Activated CD4-positive, alpha-beta T cell treated with anti-CD3 and anti-CD28 coated beads, Interleukin-2, amount 10 ng/mL, durations not matched to agents 7 days and 5 days (primary cell): ENCODE measurements at regions of chr7 and their contacts with region 1.

Region 1: GRCh38 chr7:4331711-4332110 is 350.4 kb upstream of the FOXK1 start:
- DNase-seq: no peak
- H3K4me3 Mint-ChIP-seq: no peak overlapping the region
- H3K27ac Mint-ChIP-seq: no peak overlapping the region
- H3K4me1 Mint-ChIP-seq: no peaks in the 10 kb centered on the region
- H3K27me3 Mint-ChIP-seq: no peaks in the 10 kb centered on the region

Region 2: DNA sequence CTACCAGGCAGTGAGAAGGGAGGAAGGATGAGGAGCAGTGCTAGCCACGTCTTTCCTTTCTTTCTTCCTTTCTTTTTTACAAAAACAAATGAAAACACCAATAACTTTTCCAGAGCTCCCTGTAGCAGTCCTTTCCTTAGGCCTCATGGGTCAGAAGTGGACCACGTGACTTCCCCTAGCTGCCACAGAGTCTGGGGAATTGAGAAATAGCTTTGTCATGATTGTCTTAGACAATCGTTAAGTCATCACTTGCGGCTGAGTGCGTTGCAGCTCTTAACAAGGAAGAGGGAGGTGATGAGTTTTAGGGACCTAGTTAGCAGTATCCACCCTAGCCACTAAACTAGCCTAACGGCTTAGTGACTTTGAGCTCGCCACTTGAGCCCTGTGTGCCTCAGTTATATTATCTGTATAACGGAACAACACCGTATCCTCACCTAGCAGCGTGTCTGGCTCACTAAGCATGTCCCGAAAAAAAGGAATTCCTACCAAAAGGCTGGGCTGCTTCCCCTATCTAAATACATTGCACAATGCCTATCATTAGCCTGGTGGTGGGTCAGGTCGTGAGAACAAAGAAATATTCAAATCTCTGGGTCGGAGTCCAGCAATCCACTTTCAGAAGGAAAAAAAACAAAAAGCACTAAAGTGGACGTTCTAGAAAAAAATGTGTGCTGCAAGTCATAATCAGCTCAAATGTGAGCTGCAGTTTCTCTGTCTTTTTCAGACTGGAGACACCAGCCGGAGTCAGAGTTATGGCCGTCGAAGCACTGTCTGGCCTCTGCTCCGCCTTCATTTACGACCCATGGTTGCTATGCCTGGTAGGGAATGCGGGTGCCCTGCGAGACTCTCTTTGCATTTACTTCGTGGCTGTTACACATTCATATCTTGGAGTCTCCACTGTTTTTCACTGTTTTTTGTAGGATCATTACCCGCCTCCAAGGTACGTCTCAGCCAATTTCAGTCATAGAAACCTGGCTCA is 11.8 kb after region 1 on chr7:
- CTCF ChIA-PET with region 1: no interaction called
- POLR2A ChIA-PET with region 1: no interaction called
- DNase-seq: no peak
- H3K4me3 Mint-ChIP-seq: no peak overlapping the region
- H3K27ac Mint-ChIP-seq: no peak overlapping the region
- H3K4me1 Mint-ChIP-seq: no peaks in the 10 kb centered on the region
- H3K27me3 Mint-ChIP-seq: no peaks in the 10 kb centered on the region

Region 3: GRCh38 chr7:4416396-4417056 is 84.8 kb after region 1 on chr7:
- CTCF ChIA-PET with region 1: no interaction called
- POLR2A ChIA-PET with region 1: interaction called, 15 read pairs
- DNase-seq: no peak
- H3K4me3 Mint-ChIP-seq: no peak overlapping the region
- H3K27ac Mint-ChIP-seq: no peak overlapping the region
- H3K4me1 Mint-ChIP-seq: no peaks in the 10 kb centered on the region
- H3K27me3 Mint-ChIP-seq: no peaks in the 10 kb centered on the region